ENCODE measurements at regions of chr2 and their contacts with region 1.

Region 1: DNA sequence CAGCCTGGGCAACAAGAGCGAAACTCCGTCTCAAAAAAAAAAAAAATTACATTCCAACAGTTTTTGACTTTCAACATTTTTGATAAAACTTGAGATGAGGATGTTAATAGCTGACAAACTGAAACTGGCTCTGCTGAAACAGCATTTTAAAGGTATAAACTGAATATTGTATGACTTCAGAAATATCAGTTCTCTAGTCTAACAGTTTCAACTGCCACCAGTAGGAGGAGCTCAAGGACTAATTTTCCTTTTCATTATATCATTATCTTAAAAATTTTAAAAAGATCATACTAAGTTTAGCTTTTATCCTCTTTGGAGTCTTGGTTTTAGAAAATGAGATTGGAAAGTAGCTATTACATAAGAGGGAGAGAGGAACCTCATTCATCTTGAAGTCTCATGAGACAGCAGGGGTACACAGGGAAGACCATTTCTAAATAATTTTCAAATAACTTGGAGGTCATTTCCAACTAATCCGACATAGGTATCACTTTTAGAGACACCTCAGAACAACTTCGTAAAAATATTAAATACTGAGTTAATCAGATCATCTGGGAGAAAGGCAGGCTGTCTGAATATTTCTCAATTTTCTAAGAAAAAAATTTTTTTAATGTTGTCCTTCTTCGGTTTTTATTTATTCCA is 37.6 kb upstream of the MCM6 start:
- DNase-seq: peak in 11 of 14 experiments; percentile 7 to 83 (median 29)
- ATAC-seq: peak; percentile 72
- H3K4me3 ChIP-seq: no peak overlapping the region
- H3K4me3 Mint-ChIP-seq: no peak overlapping the region
- H3K27ac ChIP-seq: no peak overlapping the region
- H3K27ac Mint-ChIP-seq: peak overlapping the region; percentile 11
- H3K4me1 ChIP-seq: no peaks in the 10 kb centered on the region
- H3K4me1 Mint-ChIP-seq: peaks cover 4% of the 10 kb centered on the region
- H3K27me3 ChIP-seq: no peaks in the 10 kb centered on the region
- H3K27me3 Mint-ChIP-seq: no peaks in the 10 kb centered on the region
- CTCF ChIP-seq: peak; percentile 90

Region 2: DNA sequence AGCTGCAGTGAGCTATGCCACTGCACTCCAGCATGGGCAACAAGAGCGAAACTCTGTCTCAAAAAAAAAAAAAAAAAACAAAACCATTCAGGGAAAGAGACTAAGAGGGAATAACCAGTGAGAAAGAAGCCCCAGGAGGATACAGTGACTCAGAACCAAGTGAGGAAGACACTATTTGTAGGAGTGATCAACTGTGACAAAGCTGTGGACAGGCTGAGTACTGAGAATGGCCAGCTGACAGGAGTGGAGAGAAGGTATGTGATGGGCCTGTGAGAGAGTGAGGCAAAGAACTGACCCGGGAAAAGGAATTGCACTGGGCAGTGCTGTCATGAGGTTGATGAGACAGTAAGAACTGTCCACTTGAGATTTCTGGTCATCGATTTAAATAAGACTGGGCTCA is 70.2 kb before region 1 on chr2:
- CTCF ChIA-PET with region 1: no interaction called
- POLR2A ChIA-PET with region 1: no interaction called
- intact Hi-C with region 1: no loop called
- DNase-seq: no peak
- ATAC-seq: no peak
- H3K4me3 ChIP-seq: no peak overlapping the region
- H3K4me3 Mint-ChIP-seq: no peak overlapping the region
- H3K27ac ChIP-seq: no peak overlapping the region
- H3K27ac Mint-ChIP-seq: no peak overlapping the region
- H3K4me1 ChIP-seq: no peaks in the 10 kb centered on the region
- H3K4me1 Mint-ChIP-seq: no peaks in the 10 kb centered on the region
- H3K27me3 ChIP-seq: no peaks in the 10 kb centered on the region
- H3K27me3 Mint-ChIP-seq: no peaks in the 10 kb centered on the region
- CTCF ChIP-seq: no peak

Region 3: DNA sequence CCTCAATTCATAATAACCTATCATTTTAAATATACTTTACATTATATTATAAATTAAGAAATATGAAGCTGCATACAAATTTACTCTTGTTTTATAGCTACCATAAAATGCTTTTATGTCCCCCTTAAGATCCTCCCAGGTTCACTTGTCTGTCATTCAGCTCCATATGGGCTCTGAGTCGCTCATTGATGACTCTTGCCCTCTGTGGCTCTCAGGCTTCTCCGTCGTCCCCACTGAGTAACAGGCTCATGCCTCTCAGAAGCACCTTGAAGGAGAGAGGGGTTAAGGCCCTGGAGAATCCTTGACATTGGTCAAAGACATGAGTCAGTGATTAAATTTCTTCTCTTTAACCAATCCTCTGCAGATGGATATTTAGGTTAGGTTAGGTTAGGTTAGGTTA is 31.4 kb before region 1 on chr2:
- CTCF ChIA-PET with region 1: no interaction called
- POLR2A ChIA-PET with region 1: no interaction called
- intact Hi-C with region 1: no loop called
- DNase-seq: no peak
- ATAC-seq: no peak
- H3K4me3 ChIP-seq: no peak overlapping the region
- H3K4me3 Mint-ChIP-seq: no peak overlapping the region
- H3K27ac ChIP-seq: no peak overlapping the region
- H3K27ac Mint-ChIP-seq: no peak overlapping the region
- H3K4me1 ChIP-seq: no peaks in the 10 kb centered on the region
- H3K4me1 Mint-ChIP-seq: peaks cover 10% of the 10 kb centered on the region
- H3K27me3 ChIP-seq: no peaks in the 10 kb centered on the region
- H3K27me3 Mint-ChIP-seq: no peaks in the 10 kb centered on the region
- CTCF ChIP-seq: no peak

Region 4: DNA sequence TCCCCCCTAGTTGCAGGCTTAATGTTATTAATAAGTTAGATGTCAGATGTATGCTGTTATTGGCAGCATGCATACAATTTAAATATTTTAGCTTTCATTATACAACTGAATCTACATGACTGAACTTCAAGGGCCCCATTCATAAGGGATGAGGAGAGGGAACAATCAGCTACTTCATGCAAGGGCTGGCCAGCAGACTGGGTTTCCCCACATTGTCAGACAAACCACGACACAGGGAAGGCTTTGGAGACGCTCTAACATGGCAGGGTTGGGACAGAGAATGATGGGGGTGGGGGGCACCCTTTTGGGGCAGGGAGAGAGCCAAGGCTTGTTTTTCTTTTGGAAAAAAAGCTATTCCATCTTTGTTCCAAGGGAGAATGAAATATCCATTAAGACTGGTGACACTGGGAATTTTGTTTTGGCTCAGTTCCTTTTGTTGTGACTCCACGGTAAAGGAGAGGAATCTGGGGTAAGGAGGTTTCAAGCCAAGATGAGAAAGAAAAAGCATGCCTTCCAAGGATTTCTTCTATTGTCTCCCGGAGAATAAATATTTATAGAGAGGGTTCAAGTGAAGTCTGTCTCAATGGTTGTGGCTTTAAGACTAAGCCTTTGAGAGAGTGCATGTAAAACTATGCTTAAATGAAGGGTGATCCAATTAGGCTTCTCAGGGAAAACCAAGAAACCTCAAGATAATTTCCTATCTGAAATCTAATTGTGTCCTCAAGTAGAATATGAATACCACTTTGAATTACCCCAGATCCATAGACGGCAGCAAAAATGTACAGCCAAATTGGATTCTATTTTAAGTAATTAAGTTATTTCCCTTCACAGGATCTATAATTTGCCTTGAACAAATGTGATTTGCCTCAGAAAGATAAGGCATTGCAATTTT is 198.7 kb after region 1 on chr2:
- CTCF ChIA-PET with region 1: no interaction called
- POLR2A ChIA-PET with region 1: no interaction called
- intact Hi-C with region 1: loop called (anchors 2 to 5 kb)
- DNase-seq: peak in 3 of 14 experiments; percentile 28 to 57 (median 44)
- ATAC-seq: no peak
- H3K4me3 ChIP-seq: no peak overlapping the region
- H3K4me3 Mint-ChIP-seq: peak overlapping the region; percentile 99
- H3K27ac ChIP-seq: no peak overlapping the region
- H3K27ac Mint-ChIP-seq: peak overlapping the region; percentile 97
- H3K4me1 ChIP-seq: peaks cover 19% of the 10 kb centered on the region
- H3K4me1 Mint-ChIP-seq: peaks cover 44% of the 10 kb centered on the region
- H3K27me3 ChIP-seq: no peaks in the 10 kb centered on the region
- H3K27me3 Mint-ChIP-seq: peaks cover 14% of the 10 kb centered on the region
- CTCF ChIP-seq: no peak

Region 5: GRCh38 chr2:136378712-136379595 is 465.1 kb after region 1 on chr2:
- CTCF ChIA-PET with region 1: interaction called, 49 read pairs
- POLR2A ChIA-PET with region 1: interaction called, 24 read pairs
- intact Hi-C with region 1: loop called (anchors 1 kb)
- DNase-seq: peak; percentile 63 to 88 (median 76)
- ATAC-seq: peak; percentile 35
- H3K4me3 ChIP-seq: no peak overlapping the region
- H3K4me3 Mint-ChIP-seq: peak overlapping the region; percentile 31
- H3K27ac ChIP-seq: no peak overlapping the region
- H3K27ac Mint-ChIP-seq: peak overlapping the region; percentile 80
- H3K4me1 ChIP-seq: peaks cover 43% of the 10 kb centered on the region
- H3K4me1 Mint-ChIP-seq: peaks cover 72% of the 10 kb centered on the region
- H3K27me3 ChIP-seq: no peaks in the 10 kb centered on the region
- H3K27me3 Mint-ChIP-seq: no peaks in the 10 kb centered on the region
- CTCF ChIP-seq: peak; percentile 78

Region 6: GRCh38 chr2:136665736-136666135 is 751.9 kb after region 1 on chr2:
- CTCF ChIA-PET with region 1: no interaction called
- POLR2A ChIA-PET with region 1: no interaction called
- intact Hi-C with region 1: loop called (anchors 5 to 10 kb)
- DNase-seq: no peak
- ATAC-seq: no peak
- H3K4me3 ChIP-seq: no peak overlapping the region
- H3K4me3 Mint-ChIP-seq: no peak overlapping the region
- H3K27ac ChIP-seq: no peak overlapping the region
- H3K27ac Mint-ChIP-seq: no peak overlapping the region
- H3K4me1 ChIP-seq: no peaks in the 10 kb centered on the region
- H3K4me1 Mint-ChIP-seq: no peaks in the 10 kb centered on the region
- H3K27me3 ChIP-seq: no peaks in the 10 kb centered on the region
- H3K27me3 Mint-ChIP-seq: peaks cover 13% of the 10 kb centered on the region
- CTCF ChIP-seq: no peak

Region 7: GRCh38 chr2:136727973-136728699 is 814.3 kb after region 1 on chr2:
- CTCF ChIA-PET with region 1: no interaction called
- POLR2A ChIA-PET with region 1: no interaction called
- intact Hi-C with region 1: loop called in 1 of 2 experiments (anchors 5 kb)
- DNase-seq: no peak
- ATAC-seq: no peak
- H3K4me3 ChIP-seq: no peak overlapping the region
- H3K4me3 Mint-ChIP-seq: no peak overlapping the region
- H3K27ac ChIP-seq: no peak overlapping the region
- H3K27ac Mint-ChIP-seq: no peak overlapping the region
- H3K4me1 ChIP-seq: no peaks in the 10 kb centered on the region
- H3K4me1 Mint-ChIP-seq: no peaks in the 10 kb centered on the region
- H3K27me3 ChIP-seq: no peaks in the 10 kb centered on the region
- H3K27me3 Mint-ChIP-seq: peaks cover 21% of the 10 kb centered on the region
- CTCF ChIP-seq: no peak

Region 8: GRCh38 chr2:137838255-137839092 is 1924.6 kb after region 1 on chr2:
- CTCF ChIA-PET with region 1: no interaction called
- POLR2A ChIA-PET with region 1: no interaction called
- intact Hi-C with region 1: loop called (anchors 2 to 5 kb)
- DNase-seq: peak in 3 of 14 experiments; percentile 41 to 49 (median 42)
- ATAC-seq: peak; percentile 34
- H3K4me3 ChIP-seq: no peak overlapping the region
- H3K4me3 Mint-ChIP-seq: no peak overlapping the region
- H3K27ac ChIP-seq: no peak overlapping the region
- H3K27ac Mint-ChIP-seq: no peak overlapping the region
- H3K4me1 ChIP-seq: no peaks in the 10 kb centered on the region
- H3K4me1 Mint-ChIP-seq: no peaks in the 10 kb centered on the region
- H3K27me3 ChIP-seq: peaks cover 0 to 9% of the 10 kb centered on the region in 2 experiments
- H3K27me3 Mint-ChIP-seq: peaks cover 11% of the 10 kb centered on the region
- CTCF ChIP-seq: peak; percentile 82

Measured in CD4-positive, alpha-beta T cell (primary cell).